Activated T-helper 1 cell treated with anti-CD3 and anti-CD28 coated beads, Interleukin-12 subunit alpha, Interleukin-12 subunit beta, Interleukin-2, Interleukin-4 antibody, amounts not matched to agents 30 ng/mL and 10 ng/mL and 1 ng/mL, durations not matched to agents 14 hours and 24 hours and 36 hours (primary cell): ENCODE measurements at regions of chr10 and their contacts with region 1.

Region 1: DNA sequence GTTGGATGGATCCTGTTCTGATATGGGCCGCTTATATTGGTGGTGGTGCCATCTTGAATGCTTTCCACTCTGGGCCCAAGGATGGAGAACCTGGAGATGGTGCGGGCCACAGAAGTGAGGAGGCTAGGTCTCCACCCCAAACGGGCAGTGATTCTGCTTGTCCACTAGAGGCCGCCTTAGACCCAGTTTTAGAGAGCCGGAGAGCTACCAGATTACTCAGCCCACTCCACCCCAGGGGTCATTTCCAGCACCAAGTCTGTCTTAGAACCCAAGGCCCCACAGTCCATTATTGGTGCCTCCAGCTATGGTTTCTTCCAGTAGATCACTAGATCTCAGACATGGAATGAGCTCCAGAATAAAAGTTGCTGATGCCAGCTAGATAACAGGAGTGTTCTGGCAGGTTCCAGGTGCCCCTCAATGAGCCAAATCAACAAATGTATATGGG is 11.8 kb upstream of the CAMK2G start:
- DNase-seq: peak; percentile 49
- H3K4me3 Mint-ChIP-seq: no peak overlapping the region
- H3K27ac Mint-ChIP-seq: no peak overlapping the region
- H3K4me1 Mint-ChIP-seq: peaks cover 28% of the 10 kb centered on the region
- H3K27me3 Mint-ChIP-seq: peaks cover 7% of the 10 kb centered on the region

Region 2: DNA sequence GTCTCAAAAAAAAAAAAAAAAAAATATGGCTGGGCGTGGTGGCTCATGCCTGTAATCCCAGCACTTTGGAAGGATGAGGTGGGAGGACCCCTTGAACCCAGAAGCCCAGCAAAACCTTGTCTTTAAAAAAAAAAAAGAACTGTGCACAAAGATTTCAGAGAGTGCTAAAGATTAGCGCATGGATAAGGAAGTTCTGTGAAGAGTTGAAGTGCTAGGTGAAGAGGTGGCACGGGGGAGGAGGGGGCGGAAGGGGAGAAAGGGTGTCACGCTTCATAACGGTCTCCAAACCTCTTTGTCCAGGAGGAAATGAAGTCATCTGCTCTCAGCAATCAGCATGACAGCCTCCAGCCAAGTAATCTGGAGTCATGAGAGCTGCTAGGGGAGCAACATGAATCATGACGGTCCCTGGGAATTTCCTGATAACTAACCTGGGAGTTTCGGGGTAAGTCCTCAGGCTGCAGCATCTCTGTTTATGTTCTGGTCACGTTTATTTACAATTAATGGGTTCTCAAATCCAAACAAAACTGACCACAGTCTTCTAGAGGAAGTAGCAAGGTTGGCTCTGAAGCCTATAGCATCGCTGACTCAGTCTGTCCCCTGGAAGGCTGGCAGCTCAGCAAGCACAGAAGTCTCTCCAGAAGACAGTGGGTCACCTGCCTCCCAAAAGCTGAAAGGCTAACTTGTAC is 22.9 kb after region 1 on chr10:
- intact Hi-C with region 1: loop called (anchors 2 kb)
- DNase-seq: peak; percentile 34
- H3K4me3 Mint-ChIP-seq: peak overlapping the region; percentile 45
- H3K27ac Mint-ChIP-seq: peak overlapping the region; percentile 56
- H3K4me1 Mint-ChIP-seq: peaks cover 46% of the 10 kb centered on the region
- H3K27me3 Mint-ChIP-seq: peaks cover 35% of the 10 kb centered on the region

Region 3: DNA sequence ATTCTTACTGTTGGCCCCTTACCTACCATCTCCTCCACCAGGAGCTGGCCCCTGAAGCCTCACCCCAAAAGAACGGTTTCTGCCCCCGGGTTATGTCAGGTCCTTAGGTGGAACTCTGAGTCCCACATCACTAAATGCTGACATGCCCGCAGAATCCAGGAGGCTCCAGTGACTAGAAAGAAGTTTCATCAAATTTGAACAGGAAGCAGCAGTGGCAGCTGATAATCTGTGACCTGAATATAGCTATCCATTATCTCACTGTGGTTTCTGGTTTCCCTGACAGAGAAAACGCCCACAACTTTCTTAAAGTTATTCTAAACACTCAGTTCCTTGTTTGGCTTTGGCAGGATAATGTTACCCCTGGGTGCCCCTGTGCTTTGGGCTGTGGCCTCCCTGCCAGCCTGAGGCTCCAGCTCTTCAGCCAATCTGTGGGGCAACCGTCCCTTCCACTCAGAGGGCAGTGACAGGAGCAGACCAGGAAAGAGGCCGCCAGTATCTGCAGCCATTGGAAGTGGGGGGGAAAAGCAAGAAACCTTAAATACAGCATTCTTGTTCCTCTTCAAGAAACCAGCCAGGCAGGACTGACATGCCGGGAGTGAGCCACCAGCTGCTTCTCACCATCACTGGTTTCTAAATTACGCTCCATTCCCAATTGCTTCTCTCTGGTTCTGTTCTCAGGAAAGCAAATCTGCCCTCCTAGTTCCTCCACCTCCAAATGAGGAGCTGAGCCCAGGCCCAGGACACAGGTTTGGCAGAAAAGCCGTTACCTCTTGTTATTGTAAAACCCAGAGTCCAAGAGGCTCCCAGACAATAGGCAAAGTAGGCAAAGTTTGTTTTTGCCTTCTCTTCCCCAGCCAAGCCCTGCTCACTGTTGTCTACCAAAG is 70.6 kb after region 1 on chr10:
- intact Hi-C with region 1: loop called (anchors 1 kb)
- DNase-seq: peak; percentile 20
- H3K4me3 Mint-ChIP-seq: peak overlapping the region; percentile 49
- H3K27ac Mint-ChIP-seq: peak overlapping the region; percentile 81
- H3K4me1 Mint-ChIP-seq: peaks cover 48% of the 10 kb centered on the region
- H3K27me3 Mint-ChIP-seq: no peaks in the 10 kb centered on the region

Region 4: GRCh38 chr10:74081192-74081803 is 195.2 kb after region 1 on chr10:
- intact Hi-C with region 1: loop called (anchors 1 kb)
- DNase-seq: peak; percentile 12
- H3K4me3 Mint-ChIP-seq: no peak overlapping the region
- H3K27ac Mint-ChIP-seq: peak overlapping the region; percentile 0
- H3K4me1 Mint-ChIP-seq: peaks cover 48% of the 10 kb centered on the region
- H3K27me3 Mint-ChIP-seq: no peaks in the 10 kb centered on the region

Region 5: DNA sequence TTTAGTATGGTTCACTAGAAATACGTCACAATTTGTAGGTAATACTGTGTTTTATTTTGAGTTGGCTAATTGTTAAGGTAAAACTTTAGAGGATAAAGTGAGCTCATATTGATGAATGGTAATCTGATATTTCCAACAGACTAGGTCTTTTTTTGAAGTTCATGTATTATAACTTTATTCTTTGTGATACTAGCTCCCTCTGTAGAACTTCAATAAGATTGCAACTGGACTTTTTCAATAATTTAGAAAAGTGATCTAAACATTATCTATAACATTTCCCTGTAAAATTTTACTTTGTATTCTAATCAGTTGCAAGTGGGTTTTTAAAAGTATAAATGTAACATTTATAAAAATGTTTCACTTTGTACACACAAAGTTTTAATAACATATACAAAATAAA is 348.5 kb after region 1 on chr10:
- intact Hi-C with region 1: loop called (anchors 1 kb)
- DNase-seq: no peak
- H3K4me3 Mint-ChIP-seq: no peak overlapping the region
- H3K27ac Mint-ChIP-seq: no peak overlapping the region
- H3K4me1 Mint-ChIP-seq: peaks cover 17% of the 10 kb centered on the region
- H3K27me3 Mint-ChIP-seq: no peaks in the 10 kb centered on the region